ENCODE measurements at regions of chr13 and their contacts with region 1.

Region 1: DNA sequence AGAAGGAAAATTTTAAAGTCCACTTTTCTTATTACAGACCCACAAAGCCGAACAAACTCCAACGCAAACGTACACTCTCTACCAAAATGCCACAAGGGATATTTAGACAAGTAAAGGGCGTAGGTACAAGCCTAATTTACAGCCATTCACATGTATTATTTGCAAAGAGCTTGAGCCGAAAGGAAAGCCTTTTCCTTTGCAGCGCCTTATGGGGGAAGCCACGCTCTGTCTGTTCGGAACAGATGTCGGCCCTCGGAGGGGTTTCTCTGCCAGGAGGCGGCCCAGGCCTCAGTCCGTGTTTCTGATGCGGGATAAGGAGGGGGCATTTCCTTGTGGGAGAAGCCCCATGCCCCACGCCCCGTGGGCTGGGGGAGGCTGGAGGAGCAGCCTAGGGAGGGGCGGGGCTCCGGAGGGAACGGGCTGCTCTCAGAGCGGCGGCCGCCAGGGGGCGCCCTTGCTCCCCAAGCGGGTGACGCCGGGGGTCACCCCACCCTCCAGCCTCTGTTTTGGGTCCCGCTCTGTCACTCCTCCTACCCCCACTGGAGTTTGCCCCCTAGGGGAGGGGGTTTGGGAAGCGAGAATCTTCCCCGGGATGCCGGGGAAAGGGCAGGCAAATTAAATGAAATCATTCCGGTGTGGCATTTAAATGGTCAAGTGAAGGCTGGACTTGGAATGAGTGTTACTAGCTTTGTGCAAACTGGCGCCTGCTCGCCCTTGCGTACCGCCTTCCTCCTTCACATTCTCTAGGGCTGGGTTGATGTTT is 2.9 kb downstream of the HTR2A start:
- DNase-seq: peak; percentile 81
- ATAC-seq: peak; percentile 89
- H3K4me3 Mint-ChIP-seq: peak overlapping the region; percentile 69
- H3K27ac Mint-ChIP-seq: no peak overlapping the region
- H3K4me1 Mint-ChIP-seq: peaks cover 31% of the 10 kb centered on the region
- H3K27me3 Mint-ChIP-seq: peaks cover 9% of the 10 kb centered on the region
- CTCF ChIP-seq: peak; percentile 99

Region 2: DNA sequence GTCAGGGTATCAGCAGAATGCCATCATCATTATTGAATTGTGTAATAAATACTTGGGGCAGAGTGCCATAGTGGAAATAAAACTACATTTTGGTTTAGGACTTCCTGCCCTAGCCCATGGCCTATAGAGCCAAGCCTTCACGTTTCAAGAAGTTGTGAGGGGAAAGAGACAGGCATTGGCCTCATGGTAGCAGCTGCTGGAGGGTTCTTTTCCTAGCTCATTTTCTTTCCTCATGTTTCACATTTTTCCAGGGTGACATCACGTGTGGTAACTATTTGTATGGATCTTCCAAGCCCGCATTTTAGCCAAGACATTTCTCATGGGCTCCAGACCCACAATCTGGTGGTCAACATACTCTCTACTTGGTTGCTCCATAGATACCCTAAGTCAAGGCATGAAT is 260.6 kb before region 1 on chr13:
- CTCF ChIA-PET with region 1: no interaction called
- POLR2A ChIA-PET with region 1: no interaction called
- DNase-seq: no peak
- ATAC-seq: no peak
- H3K4me3 Mint-ChIP-seq: no peak overlapping the region
- H3K27ac Mint-ChIP-seq: no peak overlapping the region
- H3K4me1 Mint-ChIP-seq: peaks cover 54% of the 10 kb centered on the region
- H3K27me3 Mint-ChIP-seq: no peaks in the 10 kb centered on the region
- CTCF ChIP-seq: no peak

Region 3: DNA sequence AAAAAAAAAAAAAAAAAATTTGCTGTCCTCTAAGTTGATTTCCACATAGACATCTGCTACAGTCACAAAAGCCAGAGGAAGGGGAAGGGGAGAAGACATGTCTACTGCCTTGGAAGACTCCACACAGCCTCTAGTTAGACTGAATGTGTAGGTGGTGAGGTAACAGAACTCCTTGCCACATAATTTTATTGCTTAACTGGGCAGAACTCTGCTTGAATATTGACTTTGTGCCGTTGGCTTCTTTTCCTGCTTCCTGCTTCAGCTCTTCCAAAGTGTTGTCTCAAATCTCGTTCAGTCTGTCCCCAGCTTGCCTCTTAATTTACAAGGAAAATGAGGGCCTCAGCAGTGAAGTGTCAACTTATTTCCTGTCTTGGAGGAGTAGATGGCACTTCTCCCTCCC is 134.1 kb before region 1 on chr13:
- CTCF ChIA-PET with region 1: interaction called, 13 read pairs
- POLR2A ChIA-PET with region 1: no interaction called
- DNase-seq: no peak
- ATAC-seq: no peak
- H3K4me3 Mint-ChIP-seq: no peak overlapping the region
- H3K27ac Mint-ChIP-seq: no peak overlapping the region
- H3K4me1 Mint-ChIP-seq: peaks cover 6% of the 10 kb centered on the region
- H3K27me3 Mint-ChIP-seq: no peaks in the 10 kb centered on the region
- CTCF ChIP-seq: no peak

Region 4: GRCh38 chr13:46778890-46779289 is 115.1 kb before region 1 on chr13:
- CTCF ChIA-PET with region 1: no interaction called
- POLR2A ChIA-PET with region 1: no interaction called
- DNase-seq: no peak
- ATAC-seq: no peak
- H3K4me3 Mint-ChIP-seq: no peak overlapping the region
- H3K27ac Mint-ChIP-seq: no peak overlapping the region
- H3K4me1 Mint-ChIP-seq: no peaks in the 10 kb centered on the region
- H3K27me3 Mint-ChIP-seq: no peaks in the 10 kb centered on the region
- CTCF ChIP-seq: no peak

Region 5: DNA sequence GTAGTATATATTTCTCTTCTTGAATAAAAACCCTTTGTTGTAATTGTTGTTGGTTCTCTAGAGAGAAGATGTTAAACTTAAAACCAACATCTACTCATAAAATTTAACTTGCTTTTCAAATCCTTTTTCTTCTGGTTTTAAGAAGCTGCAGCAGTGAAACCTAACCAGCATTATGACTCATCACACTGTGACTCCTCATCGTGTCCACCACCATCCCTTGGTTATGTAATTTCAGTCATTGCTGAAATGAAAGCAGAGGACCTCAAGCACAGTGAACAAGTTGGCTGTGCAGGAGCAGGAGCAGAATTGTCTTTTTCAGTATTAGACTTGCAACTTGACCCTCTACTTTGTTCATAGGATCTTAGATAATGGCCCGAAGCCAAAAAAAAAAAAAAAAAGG is 67.7 kb after region 1 on chr13:
- CTCF ChIA-PET with region 1: interaction called, 28 read pairs
- POLR2A ChIA-PET with region 1: no interaction called
- DNase-seq: no peak
- ATAC-seq: no peak
- H3K4me3 Mint-ChIP-seq: no peak overlapping the region
- H3K27ac Mint-ChIP-seq: no peak overlapping the region
- H3K4me1 Mint-ChIP-seq: no peaks in the 10 kb centered on the region
- H3K27me3 Mint-ChIP-seq: no peaks in the 10 kb centered on the region
- CTCF ChIP-seq: no peak

Region 6: GRCh38 chr13:46975173-46975572 is 81.2 kb after region 1 on chr13:
- CTCF ChIA-PET with region 1: interaction called, 13 read pairs
- POLR2A ChIA-PET with region 1: no interaction called
- DNase-seq: no peak
- ATAC-seq: no peak
- H3K4me3 Mint-ChIP-seq: no peak overlapping the region
- H3K27ac Mint-ChIP-seq: no peak overlapping the region
- H3K4me1 Mint-ChIP-seq: no peaks in the 10 kb centered on the region
- H3K27me3 Mint-ChIP-seq: no peaks in the 10 kb centered on the region; the same call in 1 of the 2 replicates
- CTCF ChIP-seq: no peak

Region 7: GRCh38 chr13:47397739-47398138 is 503.8 kb after region 1 on chr13:
- CTCF ChIA-PET with region 1: interaction called, 10 read pairs
- POLR2A ChIA-PET with region 1: no interaction called
- DNase-seq: no peak
- ATAC-seq: peak; percentile 74
- H3K4me3 Mint-ChIP-seq: no peak overlapping the region
- H3K27ac Mint-ChIP-seq: no peak overlapping the region
- H3K4me1 Mint-ChIP-seq: peaks cover 10% of the 10 kb centered on the region
- H3K27me3 Mint-ChIP-seq: no peaks in the 10 kb centered on the region
- CTCF ChIP-seq: peak; percentile 17; the same call in 1 of the 2 replicates

Region 8: GRCh38 chr13:47459512-47459911 is 565.5 kb after region 1 on chr13:
- CTCF ChIA-PET with region 1: interaction called, 10 read pairs
- POLR2A ChIA-PET with region 1: no interaction called
- DNase-seq: no peak
- ATAC-seq: peak; percentile 42
- H3K4me3 Mint-ChIP-seq: no peak overlapping the region
- H3K27ac Mint-ChIP-seq: no peak overlapping the region
- H3K4me1 Mint-ChIP-seq: peaks cover 31% of the 10 kb centered on the region
- H3K27me3 Mint-ChIP-seq: no peaks in the 10 kb centered on the region
- CTCF ChIP-seq: no peak